T-cell (primary cell): ENCODE measurements at regions of chr15 and their contacts with region 1.

Region 1: DNA sequence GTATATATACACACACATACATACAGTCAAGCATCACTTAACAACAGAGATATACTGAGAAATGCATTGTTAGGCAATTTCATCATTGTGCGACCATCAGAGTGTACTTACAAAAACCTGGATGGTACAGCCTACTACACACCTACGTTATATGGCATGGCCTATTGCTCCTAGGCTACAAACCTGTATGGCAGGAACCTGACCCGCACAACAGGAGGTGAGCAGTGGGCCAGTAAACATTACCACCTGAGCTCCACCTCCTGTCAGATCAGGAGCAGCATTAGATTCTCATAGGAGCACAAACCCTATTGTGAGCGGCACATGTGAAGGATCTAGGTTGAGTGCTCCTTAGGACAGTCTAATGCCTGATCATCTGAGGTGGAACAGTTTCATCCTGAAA is 89.7 kb downstream of the SCAPER start:
- DNase-seq: no peak
- ATAC-seq: no peak
- H3K4me3 ChIP-seq: no peak overlapping the region
- H3K4me3 Mint-ChIP-seq: no peak overlapping the region
- H3K27ac ChIP-seq: no peak overlapping the region
- H3K27ac Mint-ChIP-seq: peak overlapping the region in 1 of 2 donors; percentile 4
- H3K4me1 ChIP-seq: no peaks in the 10 kb centered on the region
- H3K4me1 Mint-ChIP-seq: peaks cover 23 to 51% (median 40%) of the 10 kb centered on the region in 3 donors
- H3K27me3 ChIP-seq: no peaks in the 10 kb centered on the region
- H3K27me3 Mint-ChIP-seq: no peaks in the 10 kb centered on the region

Region 2: DNA sequence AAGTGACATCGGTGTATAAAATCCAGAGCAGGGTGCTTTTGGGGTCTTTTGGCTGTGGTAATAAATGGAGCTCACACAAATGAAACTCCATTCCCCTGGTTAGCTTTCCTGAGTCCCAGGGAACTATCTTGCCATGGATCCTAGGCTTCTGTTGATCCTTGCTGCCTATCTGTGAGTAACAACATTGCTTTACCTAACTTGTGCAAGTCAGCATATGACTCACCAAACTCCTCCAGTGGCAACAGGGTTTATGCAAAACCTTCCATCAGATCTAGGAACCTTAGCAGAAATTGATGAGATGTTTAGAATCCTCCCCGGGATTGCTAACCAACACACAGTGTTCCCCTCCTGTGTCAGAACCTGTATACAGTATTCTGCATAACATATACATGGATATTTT is 15.6 kb before region 1 on chr15:
- CTCF ChIA-PET with region 1: interaction called in 1 of 2 experiments, 10 read pairs
- POLR2A ChIA-PET with region 1: no interaction called
- DNase-seq: no peak
- ATAC-seq: no peak
- H3K4me3 ChIP-seq: no peak overlapping the region
- H3K4me3 Mint-ChIP-seq: no peak overlapping the region
- H3K27ac ChIP-seq: no peak overlapping the region
- H3K27ac Mint-ChIP-seq: no peak overlapping the region
- H3K4me1 ChIP-seq: no peaks in the 10 kb centered on the region
- H3K4me1 Mint-ChIP-seq: no peaks in the 10 kb centered on the region
- H3K27me3 ChIP-seq: no peaks in the 10 kb centered on the region
- H3K27me3 Mint-ChIP-seq: no peaks in the 10 kb centered on the region

Region 3: DNA sequence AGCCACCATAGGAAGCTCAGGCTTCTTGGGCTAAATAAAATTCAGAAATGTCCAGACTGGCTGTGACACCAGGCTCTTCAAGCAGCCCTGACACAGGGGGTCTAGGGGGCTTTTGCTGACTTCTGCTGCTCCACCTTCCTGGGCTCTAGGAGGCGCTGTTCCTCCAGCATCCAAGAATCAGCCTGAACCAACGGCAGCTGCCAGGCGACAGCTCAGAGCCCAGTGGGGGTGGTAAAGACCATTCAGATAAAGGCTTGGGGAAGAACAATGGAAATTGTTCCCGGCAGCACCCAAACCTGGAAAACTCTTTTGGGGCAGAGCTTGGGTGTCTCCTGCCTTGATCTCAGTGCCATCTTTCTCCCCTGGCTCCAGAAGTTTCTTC is 158.0 kb after region 1 on chr15:
- CTCF ChIA-PET with region 1: no interaction called
- POLR2A ChIA-PET with region 1: no interaction called
- DNase-seq: peak; percentile 27 to 83 (median 58)
- ATAC-seq: peak; percentile 62 to 81 (median 73)
- H3K4me3 ChIP-seq: no peak overlapping the region
- H3K4me3 Mint-ChIP-seq: no peak overlapping the region
- H3K27ac ChIP-seq: no peak overlapping the region
- H3K27ac Mint-ChIP-seq: no peak overlapping the region
- H3K4me1 ChIP-seq: peaks cover 0 to 5% of the 10 kb centered on the region in 2 experiments
- H3K4me1 Mint-ChIP-seq: peaks cover 6 to 18% (median 14%) of the 10 kb centered on the region in 3 donors
- H3K27me3 ChIP-seq: no peaks in the 10 kb centered on the region
- H3K27me3 Mint-ChIP-seq: no peaks in the 10 kb centered on the region

Region 4: GRCh38 chr15:77126529-77127326 is 311.3 kb after region 1 on chr15:
- CTCF ChIA-PET with region 1: no interaction called
- POLR2A ChIA-PET with region 1: no interaction called
- DNase-seq: no peak
- ATAC-seq: no peak
- H3K4me3 ChIP-seq: no peak overlapping the region
- H3K4me3 Mint-ChIP-seq: no peak overlapping the region
- H3K27ac ChIP-seq: no peak overlapping the region
- H3K27ac Mint-ChIP-seq: no peak overlapping the region
- H3K4me1 ChIP-seq: no peaks in the 10 kb centered on the region
- H3K4me1 Mint-ChIP-seq: peaks cover 0 to 4% (median 0%) of the 10 kb centered on the region in 3 donors
- H3K27me3 ChIP-seq: no peaks in the 10 kb centered on the region
- H3K27me3 Mint-ChIP-seq: no peaks in the 10 kb centered on the region